ENCODE measurements at regions of chr4 and their contacts with region 1.

Region 1: DNA sequence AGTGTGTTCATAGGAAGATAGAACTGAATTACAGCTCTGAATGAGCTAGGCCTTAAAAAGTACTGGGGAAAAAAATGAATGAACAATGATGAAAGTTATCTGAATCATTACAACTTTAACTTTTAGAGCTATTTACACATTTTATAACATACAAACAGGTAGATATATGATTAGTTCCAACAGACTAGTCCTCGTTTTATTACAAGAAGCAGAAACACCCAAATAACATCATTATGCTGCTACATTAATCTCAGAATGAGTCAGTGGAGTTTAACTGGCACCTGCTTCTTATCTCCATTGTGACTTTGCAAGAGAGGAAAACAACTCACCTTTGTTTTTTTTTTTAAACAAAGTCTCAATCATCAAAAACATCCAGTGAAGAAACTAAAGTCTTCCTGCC is 15.2 kb downstream of the ATP8A1 start:
- DNase-seq: no peak
- H3K4me3 ChIP-seq: no peak overlapping the region
- H3K4me3 Mint-ChIP-seq: no peak overlapping the region
- H3K27ac Mint-ChIP-seq: peak overlapping the region; percentile 94
- H3K4me1 ChIP-seq: peaks cover 38% of the 10 kb centered on the region
- H3K4me1 Mint-ChIP-seq: peaks cover 21% of the 10 kb centered on the region
- H3K27me3 ChIP-seq: no peaks in the 10 kb centered on the region
- H3K27me3 Mint-ChIP-seq: no peaks in the 10 kb centered on the region
- CTCF ChIP-seq: no peak

Region 2: DNA sequence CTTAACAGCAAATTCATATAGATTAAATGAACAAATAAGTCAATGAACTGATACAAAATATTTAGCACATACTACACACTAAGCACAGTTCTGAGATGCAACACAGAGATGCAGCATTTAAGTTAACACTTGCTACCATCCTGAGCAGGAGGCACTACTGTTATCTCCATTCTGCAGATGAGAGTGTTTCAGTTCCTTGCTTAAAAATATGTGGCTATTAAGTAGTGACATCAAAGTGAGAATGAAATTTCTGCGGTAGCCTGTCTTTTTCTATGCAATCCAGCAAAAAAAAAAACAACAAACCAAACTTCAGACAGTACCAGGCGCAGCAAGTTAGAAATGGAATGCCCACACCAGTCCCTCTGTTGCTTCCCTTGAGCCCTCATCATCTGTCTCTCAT is 153.5 kb before region 1 on chr4:
- CTCF ChIA-PET with region 1: no interaction called
- POLR2A ChIA-PET with region 1: no interaction called
- intact Hi-C with region 1: no loop called
- DNase-seq: no peak
- H3K4me3 ChIP-seq: no peak overlapping the region
- H3K4me3 Mint-ChIP-seq: no peak overlapping the region
- H3K27ac Mint-ChIP-seq: no peak overlapping the region
- H3K4me1 ChIP-seq: peaks cover 6% of the 10 kb centered on the region
- H3K4me1 Mint-ChIP-seq: peaks cover under 1% of the 10 kb centered on the region
- H3K27me3 ChIP-seq: no peaks in the 10 kb centered on the region
- H3K27me3 Mint-ChIP-seq: no peaks in the 10 kb centered on the region
- CTCF ChIP-seq: no peak

Region 3: DNA sequence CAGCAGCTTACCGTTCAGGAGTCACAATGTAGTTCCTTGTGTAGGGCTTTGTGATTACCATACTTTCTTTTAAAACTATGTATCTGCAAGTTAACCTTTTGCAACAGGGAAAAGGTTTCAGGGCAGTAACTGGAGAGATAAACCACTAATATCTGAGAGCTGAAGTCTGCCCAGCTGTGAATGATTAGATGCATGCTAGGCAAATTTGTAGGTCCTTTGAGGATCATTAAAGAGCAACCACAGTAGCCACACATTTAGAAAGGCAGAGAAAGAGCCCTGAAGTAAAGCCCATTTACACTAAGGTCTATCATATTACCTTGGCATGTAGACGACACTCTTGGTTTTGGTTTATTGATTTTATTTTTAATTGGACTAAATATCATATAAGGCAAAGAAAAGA is 44.7 kb before region 1 on chr4:
- CTCF ChIA-PET with region 1: no interaction called
- POLR2A ChIA-PET with region 1: no interaction called
- intact Hi-C with region 1: loop called (anchors 1 kb)
- DNase-seq: no peak
- H3K4me3 ChIP-seq: no peak overlapping the region
- H3K4me3 Mint-ChIP-seq: no peak overlapping the region
- H3K27ac Mint-ChIP-seq: no peak overlapping the region
- H3K4me1 ChIP-seq: no peaks in the 10 kb centered on the region
- H3K4me1 Mint-ChIP-seq: no peaks in the 10 kb centered on the region
- H3K27me3 ChIP-seq: no peaks in the 10 kb centered on the region
- H3K27me3 Mint-ChIP-seq: no peaks in the 10 kb centered on the region
- CTCF ChIP-seq: no peak

Region 4: DNA sequence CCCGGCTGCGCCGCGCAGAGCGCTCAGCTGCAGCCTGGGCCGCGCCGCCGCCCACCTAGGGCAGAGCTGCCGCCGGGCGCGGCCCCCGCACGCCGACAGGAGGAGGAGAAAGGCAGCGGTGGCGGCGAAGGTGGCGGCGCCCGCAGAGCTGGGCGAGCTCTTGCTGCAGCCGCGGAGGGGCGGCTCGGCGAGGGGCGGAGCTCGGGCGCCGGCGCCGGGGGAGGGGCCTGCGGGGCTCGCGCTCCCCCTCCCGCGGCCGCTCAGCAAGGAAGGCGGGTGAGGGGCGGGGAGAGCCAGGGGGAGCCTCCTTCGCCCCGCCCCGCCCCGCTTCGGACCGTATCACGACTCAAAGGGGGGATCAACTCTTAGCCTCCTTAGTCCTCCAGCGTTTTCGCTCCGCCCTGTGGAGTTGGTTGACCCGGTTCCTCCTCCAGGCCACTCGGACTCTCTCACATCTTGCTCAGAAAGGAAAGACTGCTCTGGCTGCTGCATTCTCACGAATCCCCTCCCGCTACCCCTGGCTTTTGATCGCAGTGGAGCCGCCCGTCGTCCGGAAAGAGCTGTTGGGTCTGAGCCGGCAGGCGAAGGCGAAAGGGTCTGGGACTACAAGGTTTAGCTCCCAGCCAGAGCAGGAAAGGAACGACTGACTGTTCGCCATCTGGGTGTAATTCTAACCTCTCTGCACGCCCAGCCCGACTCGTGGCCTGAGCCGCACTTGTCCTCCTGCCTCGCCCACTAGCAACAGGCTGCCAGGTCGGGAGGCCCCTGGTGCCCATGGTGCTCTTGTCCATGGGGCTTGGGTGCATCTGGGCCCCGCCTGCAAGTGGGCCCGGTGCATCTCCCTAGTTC is 15.5 kb after region 1 on chr4 and contains the start of gene ATP8A1:
- CTCF ChIA-PET with region 1: no interaction called
- POLR2A ChIA-PET with region 1: interaction called, 4 read pairs
- intact Hi-C with region 1: loop called (anchors 2 kb)
- DNase-seq: peak; percentile 87 to 92
- H3K4me3 ChIP-seq: peak within 1 kb of the TSS; percentile 89
- H3K4me3 Mint-ChIP-seq: peak within 1 kb of the TSS; percentile 76
- H3K27ac Mint-ChIP-seq: peak within 1 kb of the TSS; percentile 96
- H3K4me1 ChIP-seq: peaks cover 23% of the 10 kb centered on the region; the same call in 1 of the 2 replicates
- H3K4me1 Mint-ChIP-seq: peaks cover 28% of the 10 kb centered on the region
- H3K27me3 ChIP-seq: no peaks in the 10 kb centered on the region
- H3K27me3 Mint-ChIP-seq: no peaks in the 10 kb centered on the region
- CTCF ChIP-seq: no peak
- total RNA-seq, gene ATP8A1: 9.3 and 11.6 TPM in 2 replicates

Region 5: DNA sequence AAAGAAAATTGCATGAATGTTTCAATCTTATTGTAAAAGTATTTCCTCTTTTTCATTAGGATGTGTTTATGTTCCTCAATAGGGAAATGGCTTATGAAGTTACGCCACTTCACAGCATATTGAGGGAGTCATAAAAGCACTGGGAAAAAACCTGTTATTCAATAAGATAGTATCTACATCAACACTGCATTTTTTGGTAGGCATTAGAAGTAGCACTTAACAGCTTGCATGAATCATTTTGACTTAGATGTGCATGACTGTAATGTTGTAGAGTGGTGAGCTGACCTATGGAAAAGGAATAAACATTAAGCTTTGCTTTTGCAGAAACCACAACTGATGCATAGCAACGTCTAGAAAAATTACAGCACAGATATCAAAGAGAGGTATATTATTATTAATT is 139.7 kb after region 1 on chr4:
- CTCF ChIA-PET with region 1: no interaction called
- POLR2A ChIA-PET with region 1: no interaction called
- intact Hi-C with region 1: no loop called
- DNase-seq: no peak
- H3K4me3 ChIP-seq: no peak overlapping the region
- H3K4me3 Mint-ChIP-seq: no peak overlapping the region
- H3K27ac Mint-ChIP-seq: no peak overlapping the region
- H3K4me1 ChIP-seq: no peaks in the 10 kb centered on the region
- H3K4me1 Mint-ChIP-seq: no peaks in the 10 kb centered on the region
- H3K27me3 ChIP-seq: no peaks in the 10 kb centered on the region
- H3K27me3 Mint-ChIP-seq: peaks cover 5% of the 10 kb centered on the region
- CTCF ChIP-seq: no peak